B cell (primary cell): ENCODE measurements at regions of chr9 and their contacts with region 1.

Region 1: GRCh38 chr9:35814841-35815543 is at the start of gene HINT2:
- DNase-seq: peak; percentile 98
- ATAC-seq: peak; percentile 82
- H3K4me3 ChIP-seq: peak within 1 kb of the TSS; percentile 61 to 96 (median 88)
- H3K4me3 Mint-ChIP-seq: peak within 1 kb of the TSS; percentile 97
- H3K27ac ChIP-seq: peak within 1 kb of the TSS; percentile 87 to 88
- H3K27ac Mint-ChIP-seq: peak within 1 kb of the TSS; percentile 98
- H3K4me1 ChIP-seq: peaks cover 26 to 33% of the 10 kb centered on the region in 2 donors
- H3K4me1 Mint-ChIP-seq: peaks cover 30% of the 10 kb centered on the region
- H3K27me3 ChIP-seq: no peaks in the 10 kb centered on the region
- H3K27me3 Mint-ChIP-seq: no peaks in the 10 kb centered on the region
- CTCF ChIP-seq: no peak
- total RNA-seq, gene HINT2: 29.7 and 31.9 TPM in 2 replicates

Region 2: GRCh38 chr9:35563791-35564197 is 251.2 kb before region 1 on chr9:
- CTCF ChIA-PET with region 1: no interaction called
- POLR2A ChIA-PET with region 1: no interaction called
- intact Hi-C with region 1: no loop called
- DNase-seq: no peak
- ATAC-seq: no peak
- H3K4me3 ChIP-seq: no peak overlapping the region
- H3K4me3 Mint-ChIP-seq: peak overlapping the region; percentile 24
- H3K27ac ChIP-seq: no peak overlapping the region
- H3K27ac Mint-ChIP-seq: no peak overlapping the region
- H3K4me1 ChIP-seq: peaks cover 4 to 5% of the 10 kb centered on the region in 2 donors
- H3K4me1 Mint-ChIP-seq: peaks cover 6% of the 10 kb centered on the region
- H3K27me3 ChIP-seq: no peaks in the 10 kb centered on the region
- H3K27me3 Mint-ChIP-seq: no peaks in the 10 kb centered on the region
- CTCF ChIP-seq: no peak

Region 3: GRCh38 chr9:35603987-35604577 is 210.9 kb before region 1 on chr9:
- CTCF ChIA-PET with region 1: interaction called, 5 read pairs
- POLR2A ChIA-PET with region 1: interaction called, 3 read pairs
- intact Hi-C with region 1: loop called (anchors 1 kb)
- DNase-seq: peak; percentile 100
- ATAC-seq: peak; percentile 86
- H3K4me3 ChIP-seq: peak overlapping the region; percentile 71 to 84 (median 81)
- H3K4me3 Mint-ChIP-seq: peak overlapping the region; percentile 97
- H3K27ac ChIP-seq: peak overlapping the region; percentile 80 to 84
- H3K27ac Mint-ChIP-seq: peak overlapping the region; percentile 99
- H3K4me1 ChIP-seq: peaks cover 26 to 46% of the 10 kb centered on the region in 2 donors
- H3K4me1 Mint-ChIP-seq: peaks cover 36% of the 10 kb centered on the region
- H3K27me3 ChIP-seq: no peaks in the 10 kb centered on the region
- H3K27me3 Mint-ChIP-seq: no peaks in the 10 kb centered on the region
- CTCF ChIP-seq: peak; percentile 97

Region 4: GRCh38 chr9:35748858-35749514 is 66.0 kb before region 1 on chr9 and contains the starts of genes GBA2 and RGP1:
- CTCF ChIA-PET with region 1: interaction called, 5 read pairs
- POLR2A ChIA-PET with region 1: interaction called, 4 read pairs
- intact Hi-C with region 1: loop called (anchors 1 kb)
- DNase-seq: peak; percentile 82
- ATAC-seq: peak; percentile 83
- H3K4me3 ChIP-seq: peak within 1 kb of the TSS; percentile 73 to 92 (median 84)
- H3K4me3 Mint-ChIP-seq: peak within 1 kb of the TSS; percentile 96
- H3K27ac ChIP-seq: peak within 1 kb of the TSS; percentile 71 to 77
- H3K27ac Mint-ChIP-seq: peak within 1 kb of the TSS; percentile 96
- H3K4me1 ChIP-seq: peaks cover 37 to 41% of the 10 kb centered on the region in 2 donors
- H3K4me1 Mint-ChIP-seq: peaks cover 50% of the 10 kb centered on the region
- H3K27me3 ChIP-seq: no peaks in the 10 kb centered on the region
- H3K27me3 Mint-ChIP-seq: no peaks in the 10 kb centered on the region
- CTCF ChIP-seq: no peak
- total RNA-seq, gene GBA2: 137 and 158 TPM in 2 replicates
- total RNA-seq, gene RGP1: 42.3 and 44.3 TPM in 2 replicates

Region 5: GRCh38 chr9:35790385-35791296 is 24.4 kb before region 1 on chr9:
- CTCF ChIA-PET with region 1: interaction called, 33 read pairs
- POLR2A ChIA-PET with region 1: no interaction called
- intact Hi-C with region 1: no loop called
- DNase-seq: peak; percentile 79
- ATAC-seq: peak; percentile 92
- H3K4me3 ChIP-seq: no peak overlapping the region
- H3K4me3 Mint-ChIP-seq: peak overlapping the region; percentile 41
- H3K27ac ChIP-seq: no peak overlapping the region
- H3K27ac Mint-ChIP-seq: peak overlapping the region; percentile 26
- H3K4me1 ChIP-seq: peaks cover 5% of the 10 kb centered on the region in 2 donors
- H3K4me1 Mint-ChIP-seq: peaks cover 9% of the 10 kb centered on the region
- H3K27me3 ChIP-seq: peaks cover 0 to 6% (median 3%) of the 10 kb centered on the region in 4 experiments
- H3K27me3 Mint-ChIP-seq: peaks cover 4% of the 10 kb centered on the region
- CTCF ChIP-seq: peak; percentile 93

Region 6: DNA sequence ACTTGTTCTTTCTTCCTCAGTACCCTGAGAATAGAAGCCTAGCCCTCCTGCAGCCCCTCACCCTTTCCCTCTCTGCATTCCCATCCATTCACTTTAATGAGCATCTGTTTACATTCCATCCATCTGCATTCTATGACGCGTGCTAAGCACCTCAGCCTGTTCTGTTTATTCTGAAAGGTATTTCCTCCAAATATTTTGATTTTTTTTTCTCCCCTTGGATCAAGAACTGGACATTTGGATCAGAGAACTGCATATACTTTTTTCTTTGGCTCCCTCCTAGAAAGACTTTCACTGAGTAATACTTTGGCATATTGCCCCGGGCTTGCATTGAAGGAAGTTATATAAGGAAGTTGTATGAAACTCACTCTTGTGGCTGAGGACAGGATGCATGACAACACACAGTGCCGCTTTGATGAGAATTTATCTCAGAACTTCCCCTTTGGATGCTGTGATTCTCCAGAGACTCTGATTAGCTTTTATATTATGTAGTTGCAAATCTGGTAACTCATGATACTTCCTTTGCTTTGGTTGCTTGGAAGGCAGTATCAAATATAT is 29.8 kb after region 1 on chr9:
- CTCF ChIA-PET with region 1: interaction called, 4 read pairs
- POLR2A ChIA-PET with region 1: interaction called, 3 read pairs
- intact Hi-C with region 1: loop called (anchors 1 kb)
- DNase-seq: peak; percentile 84
- ATAC-seq: peak; percentile 75
- H3K4me3 ChIP-seq: peak overlapping the region in 1 of 5 experiments; percentile 21
- H3K4me3 Mint-ChIP-seq: peak overlapping the region; percentile 29
- H3K27ac ChIP-seq: peak overlapping the region in 1 of 2 donors; percentile 11
- H3K27ac Mint-ChIP-seq: peak overlapping the region; percentile 23
- H3K4me1 ChIP-seq: peaks cover 71 to 82% of the 10 kb centered on the region in 2 donors
- H3K4me1 Mint-ChIP-seq: peaks cover 75% of the 10 kb centered on the region
- H3K27me3 ChIP-seq: no peaks in the 10 kb centered on the region
- H3K27me3 Mint-ChIP-seq: no peaks in the 10 kb centered on the region
- CTCF ChIP-seq: no peak

Region 7: DNA sequence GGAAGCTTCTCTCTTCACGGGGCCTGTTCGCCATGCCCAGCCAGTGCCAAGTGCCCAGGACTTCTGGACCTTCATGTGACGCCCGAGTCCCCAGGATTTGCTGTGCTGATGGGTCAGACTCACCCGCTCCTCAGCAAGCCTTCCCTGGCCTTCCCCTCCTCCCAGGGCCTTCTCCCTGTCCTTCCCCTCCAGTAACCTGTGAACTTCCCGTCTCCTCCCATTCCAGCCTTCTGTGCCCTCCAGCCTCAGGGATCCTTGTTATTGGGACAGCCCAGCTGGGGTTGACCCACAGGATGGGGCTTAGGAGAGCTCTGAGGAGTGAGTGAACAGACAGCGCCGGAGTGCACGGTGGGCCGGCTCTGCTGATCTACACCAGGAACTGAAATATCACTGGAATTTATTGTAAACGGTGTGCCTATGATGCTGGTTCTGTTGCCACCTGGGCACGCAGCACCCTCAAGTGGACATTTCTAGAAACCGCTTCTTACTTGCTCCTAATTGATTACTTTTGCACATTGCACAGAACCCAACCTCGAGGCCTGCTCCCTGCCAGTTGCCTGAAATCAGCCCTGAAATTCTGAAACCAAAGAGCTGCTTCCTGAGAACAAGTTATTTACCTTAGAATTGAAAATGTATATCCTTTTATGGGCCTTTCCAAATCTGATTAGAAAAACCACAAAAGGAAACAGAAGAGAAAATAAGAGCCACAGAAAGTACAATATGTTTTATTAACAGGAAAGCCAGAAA is 95.8 kb after region 1 on chr9:
- CTCF ChIA-PET with region 1: no interaction called
- POLR2A ChIA-PET with region 1: no interaction called
- intact Hi-C with region 1: no loop called
- DNase-seq: peak; percentile 40
- ATAC-seq: no peak
- H3K4me3 ChIP-seq: no peak overlapping the region
- H3K4me3 Mint-ChIP-seq: no peak overlapping the region
- H3K27ac ChIP-seq: no peak overlapping the region
- H3K27ac Mint-ChIP-seq: no peak overlapping the region
- H3K4me1 ChIP-seq: peaks cover 4 to 7% of the 10 kb centered on the region in 2 donors
- H3K4me1 Mint-ChIP-seq: peaks cover 7% of the 10 kb centered on the region
- H3K27me3 ChIP-seq: peaks cover 0 to 13% (median 3%) of the 10 kb centered on the region in 4 experiments
- H3K27me3 Mint-ChIP-seq: peaks cover 21% of the 10 kb centered on the region
- CTCF ChIP-seq: peak; percentile 20